CD4-positive, alpha-beta memory T cell (primary cell): ENCODE measurements at regions of chr2 and their contacts with region 1.

Region 1: DNA sequence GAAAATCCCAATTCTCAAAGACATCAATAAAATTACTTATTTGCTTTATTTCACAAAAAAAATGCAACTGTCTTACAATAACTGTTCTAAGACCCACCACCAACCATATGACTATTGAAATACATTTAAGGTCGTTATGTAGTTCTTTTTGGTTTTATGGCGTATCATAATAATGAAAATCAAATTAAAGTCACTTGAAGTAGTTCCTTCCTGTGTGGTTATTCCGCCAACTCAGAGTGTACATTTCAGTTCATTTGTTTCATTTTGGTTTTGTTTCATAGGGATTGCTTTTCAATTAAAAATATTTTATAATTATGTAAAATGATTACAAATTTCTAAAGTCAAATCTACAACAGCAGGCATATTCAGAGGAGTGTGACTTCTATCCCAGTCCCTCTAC is 45.9 kb upstream of the AAK1 start:
- DNase-seq: peak in 4 of 5 donors; percentile 16 to 32 (median 27)
- H3K4me3 ChIP-seq: no peak overlapping the region
- H3K4me3 Mint-ChIP-seq: peak overlapping the region; percentile 47 to 85 (median 76)
- H3K27ac ChIP-seq: no peak overlapping the region
- H3K27ac Mint-ChIP-seq: peak overlapping the region; percentile 64 to 96 (median 94)
- H3K4me1 ChIP-seq: peaks cover 73% of the 10 kb centered on the region
- H3K4me1 Mint-ChIP-seq: peaks cover 60 to 92% (median 74%) of the 10 kb centered on the region in 4 donors
- H3K27me3 ChIP-seq: no peaks in the 10 kb centered on the region
- H3K27me3 Mint-ChIP-seq: no peaks in the 10 kb centered on the region

Region 2: GRCh38 chr2:69674316-69674670 is 15.2 kb before region 1 on chr2:
- CTCF ChIA-PET with region 1: no interaction called
- POLR2A ChIA-PET with region 1: interaction called, 4 read pairs
- intact Hi-C with region 1: loop called (anchors 2 kb)
- DNase-seq: no peak
- H3K4me3 ChIP-seq: no peak overlapping the region
- H3K4me3 Mint-ChIP-seq: no peak overlapping the region
- H3K27ac ChIP-seq: no peak overlapping the region
- H3K27ac Mint-ChIP-seq: no peak overlapping the region
- H3K4me1 ChIP-seq: no peaks in the 10 kb centered on the region
- H3K4me1 Mint-ChIP-seq: peaks cover 12% of the 10 kb centered on the region in 4 donors
- H3K27me3 ChIP-seq: no peaks in the 10 kb centered on the region
- H3K27me3 Mint-ChIP-seq: no peaks in the 10 kb centered on the region

Region 3: GRCh38 chr2:69704446-69704845 is 15.0 kb after region 1 on chr2:
- CTCF ChIA-PET with region 1: no interaction called
- POLR2A ChIA-PET with region 1: no interaction called
- intact Hi-C with region 1: no loop called
- DNase-seq: no peak
- H3K4me3 ChIP-seq: no peak overlapping the region
- H3K4me3 Mint-ChIP-seq: no peak overlapping the region
- H3K27ac ChIP-seq: no peak overlapping the region
- H3K27ac Mint-ChIP-seq: no peak overlapping the region
- H3K4me1 ChIP-seq: peaks cover under 1% of the 10 kb centered on the region
- H3K4me1 Mint-ChIP-seq: peaks cover 9 to 15% (median 9%) of the 10 kb centered on the region in 4 donors
- H3K27me3 ChIP-seq: no peaks in the 10 kb centered on the region
- H3K27me3 Mint-ChIP-seq: no peaks in the 10 kb centered on the region